H1 (cell line): ENCODE measurements at regions of chr1 and their contacts with region 1.

Region 1: GRCh38 chr1:109493805-109494539 is at the start of gene CYB561D1:
- DNase-seq: peak in 1 of 2 experiments; percentile 96
- H3K4me3 ChIP-seq: peak within 1 kb of the TSS; percentile 58 to 90 (median 80)
- H3K27ac ChIP-seq: no peak within 1 kb of the TSS
- H3K4me1 ChIP-seq: peaks cover 0 to 11% (median 4%) of the 10 kb centered on the region in 4 experiments; a peak in 4 of 7 replicates
- H3K27me3 ChIP-seq: no peaks in the 10 kb centered on the region
- CTCF ChIP-seq: peak; percentile 76 to 91 (median 81)
- EP300 ChIP-seq: peak in 1 of 2 experiments; percentile 38; a peak in 1 of 3 replicates
- POLR2A ChIP-seq: 0 out of 3 replicates have a peak, but pooled peaks of 1 of the 2 experiments have one; percentile 20
- RAD21 ChIP-seq: peak; percentile 43 to 52; a peak in 3 of 4 replicates
- total RNA-seq, gene CYB561D1: 3.6 and 4.3 TPM in 2 replicates

Region 2: DNA sequence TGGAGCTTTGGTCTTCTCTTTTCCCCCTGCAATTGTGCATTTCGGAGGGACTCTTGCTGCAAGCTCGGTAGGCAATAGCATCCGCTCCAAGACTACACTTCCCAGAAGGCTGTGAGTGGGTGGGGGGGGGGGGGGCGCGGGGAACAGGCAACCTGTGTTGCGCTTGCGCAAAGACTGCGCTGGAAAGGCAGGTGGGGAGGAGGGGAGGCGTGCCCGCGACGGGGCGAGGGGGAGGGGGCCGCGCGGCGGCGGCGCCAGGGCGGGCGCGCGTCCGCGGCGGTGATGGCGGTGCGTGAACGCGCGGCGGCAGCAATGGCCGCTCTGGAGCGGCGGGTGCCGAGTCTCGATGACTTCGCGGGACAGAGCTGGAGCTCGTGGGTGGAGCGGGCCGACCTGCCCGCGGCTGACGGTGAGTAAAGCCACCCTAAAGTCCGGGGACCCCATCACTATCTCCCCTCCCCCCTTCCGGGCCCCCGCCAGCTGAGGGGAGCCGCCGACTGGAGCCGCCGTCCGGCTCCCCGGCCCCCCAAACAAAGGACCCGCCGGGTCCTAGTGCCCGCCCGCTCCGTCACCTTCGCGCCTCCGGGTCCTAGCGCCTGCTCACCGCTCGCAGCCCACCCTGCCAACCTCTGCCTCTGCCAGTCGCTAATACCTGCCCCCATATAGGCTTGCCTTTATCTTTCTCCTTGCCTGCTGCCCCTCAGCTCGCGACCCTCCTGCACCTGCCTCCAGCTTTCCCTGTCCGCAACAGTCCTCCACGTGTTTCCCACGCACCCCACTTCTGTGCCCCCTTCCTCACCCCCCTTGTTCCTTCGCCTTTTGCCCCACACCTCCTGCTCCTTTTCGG is 10.1 kb before region 1 on chr1 and contains the start of gene ATXN7L2:
- CTCF ChIA-PET with region 1: interaction called, 666 read pairs
- POLR2A ChIA-PET with region 1: interaction called, 17 read pairs
- DNase-seq: peak in 1 of 2 experiments; percentile 91
- H3K4me3 ChIP-seq: peak within 1 kb of the TSS; percentile 63 to 97 (median 92)
- H3K27ac ChIP-seq: peak within 1 kb of the TSS; percentile 95
- H3K4me1 ChIP-seq: peaks cover 0 to 9% (median 2%) of the 10 kb centered on the region in 4 experiments; a peak in 3 of 7 replicates
- H3K27me3 ChIP-seq: peaks cover 0 to 5% (median 0%) of the 10 kb centered on the region in 4 experiments; a peak in 1 of 7 replicates
- CTCF ChIP-seq: no peak
- EP300 ChIP-seq: no peak
- POLR2A ChIP-seq: peak; percentile 87 to 92
- RAD21 ChIP-seq: no peak
- total RNA-seq, gene ATXN7L2: 9.3 and 9.8 TPM in 2 replicates

Region 3: DNA sequence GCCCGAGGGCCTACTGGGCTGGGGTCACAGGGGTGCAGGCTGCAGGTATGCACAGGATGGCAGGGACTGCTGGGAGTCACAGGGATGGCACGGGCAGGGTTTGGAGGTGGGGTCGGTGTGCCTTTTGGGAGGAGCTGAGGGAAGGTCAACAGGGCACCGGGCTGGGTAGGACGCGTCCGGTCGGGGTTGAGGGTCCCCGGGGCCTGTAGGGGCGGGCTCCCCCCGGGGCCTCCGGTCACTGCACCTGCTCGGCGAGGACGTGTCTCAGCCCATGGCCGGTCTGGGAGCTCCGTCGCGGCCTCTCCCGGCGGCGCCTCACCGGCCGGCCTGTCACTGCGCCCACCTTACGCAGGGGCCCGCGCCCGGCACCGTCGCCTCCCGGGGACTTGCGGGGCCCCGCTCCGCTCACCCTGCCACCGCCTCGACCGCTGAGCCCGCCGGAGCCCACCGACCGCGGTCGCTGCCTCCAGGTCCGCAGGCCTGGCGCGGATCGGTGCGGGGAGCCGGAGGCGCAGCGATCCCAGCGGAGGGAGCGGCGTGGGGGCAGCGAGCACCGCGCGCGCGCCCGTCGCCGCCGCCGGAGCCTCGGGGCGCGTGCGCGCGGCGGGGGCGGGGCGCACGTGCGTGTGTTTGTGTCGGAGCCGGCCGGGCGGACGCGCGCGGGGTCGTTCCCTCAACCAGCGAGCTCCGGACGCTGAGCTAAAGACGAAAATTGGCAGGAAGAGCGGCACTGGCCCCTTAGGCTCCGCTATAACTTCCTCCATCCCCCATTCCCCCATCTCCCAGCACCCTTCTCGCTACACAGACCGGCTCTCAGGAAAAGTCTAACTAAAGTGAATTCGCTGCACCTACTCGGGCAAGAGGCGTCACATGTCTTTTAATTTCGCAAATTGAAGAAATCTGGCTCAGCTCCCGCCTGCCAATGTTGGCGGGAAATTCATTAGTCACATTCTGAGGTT is 15.5 kb after region 1 on chr1 and contains the start of gene AMIGO1:
- CTCF ChIA-PET with region 1: interaction called, 666 read pairs
- POLR2A ChIA-PET with region 1: interaction called, 20 read pairs
- DNase-seq: peak in 1 of 2 experiments; percentile 80
- H3K4me3 ChIP-seq: peak within 1 kb of the TSS; percentile 77 to 87 (median 81)
- H3K27ac ChIP-seq: no peak within 1 kb of the TSS
- H3K4me1 ChIP-seq: peaks cover 0 to 7% (median 3%) of the 10 kb centered on the region in 4 experiments; a peak in 1 of 7 replicates
- H3K27me3 ChIP-seq: peaks cover 0 to 23% (median 15%) of the 10 kb centered on the region in 4 experiments; a peak in 6 of 7 replicates
- CTCF ChIP-seq: no peak
- EP300 ChIP-seq: no peak
- POLR2A ChIP-seq: no peak
- RAD21 ChIP-seq: no peak
- total RNA-seq, gene AMIGO1: 2.4 and 2.7 TPM in 2 replicates